ENCODE measurements at regions of chr10 and their contacts with region 1.

Region 1: DNA sequence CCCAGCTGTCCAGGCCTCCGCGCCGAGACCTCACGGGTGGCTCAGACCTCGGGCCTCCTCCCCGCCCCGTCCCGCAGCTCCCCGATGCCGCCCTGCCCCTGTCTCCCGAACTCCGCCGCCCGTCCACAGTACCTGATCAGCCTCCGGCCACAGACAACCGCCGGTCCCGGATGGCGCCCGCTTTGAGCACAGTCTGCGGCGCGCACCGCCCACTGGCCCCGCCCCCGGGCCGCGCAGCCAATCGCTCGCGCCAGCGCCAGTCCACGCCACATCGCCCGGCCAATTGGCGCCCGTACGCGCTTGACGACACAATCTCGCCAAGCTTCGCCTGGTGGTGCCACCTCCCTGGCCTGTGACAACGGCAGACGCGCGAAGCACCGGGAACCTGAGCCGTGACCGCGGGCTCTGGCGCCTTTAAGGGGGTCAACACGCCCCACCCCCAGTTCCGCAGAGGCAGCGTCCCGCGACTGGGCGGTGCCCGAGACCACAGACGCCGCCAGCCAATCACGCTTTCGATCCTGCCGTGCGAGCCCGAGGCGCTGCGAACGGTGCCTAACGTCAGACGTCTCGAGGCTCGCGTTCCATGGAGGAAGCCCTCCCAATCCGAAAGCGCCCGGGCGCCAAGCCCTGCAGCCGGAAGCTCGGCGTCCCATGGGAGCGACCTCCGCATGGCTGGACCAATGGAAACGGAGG is at the start of gene IDI1:
- DNase-seq: peak; percentile 99
- ATAC-seq: peak; percentile 78
- H3K4me3 ChIP-seq: peak within 1 kb of the TSS; percentile 79 to 95 (median 91)
- H3K4me3 Mint-ChIP-seq: peak within 1 kb of the TSS; percentile 92
- H3K27ac ChIP-seq: peak within 1 kb of the TSS; percentile 99 to 100
- H3K27ac Mint-ChIP-seq: peak within 1 kb of the TSS; percentile 97
- H3K4me1 ChIP-seq: peaks cover 41 to 50% of the 10 kb centered on the region in 2 donors
- H3K4me1 Mint-ChIP-seq: peaks cover 64% of the 10 kb centered on the region
- H3K27me3 ChIP-seq: no peaks in the 10 kb centered on the region
- H3K27me3 Mint-ChIP-seq: no peaks in the 10 kb centered on the region
- CTCF ChIP-seq: no peak
- total RNA-seq, gene IDI1: 59.8 and 60.7 TPM in 2 replicates

Region 2: GRCh38 chr10:127612-128432 is 921.1 kb before region 1 on chr10:
- CTCF ChIA-PET with region 1: no interaction called
- POLR2A ChIA-PET with region 1: no interaction called
- intact Hi-C with region 1: loop called (anchors 5 kb)
- DNase-seq: peak; percentile 87
- ATAC-seq: peak; percentile 92
- H3K4me3 ChIP-seq: peak overlapping the region in 3 of 5 experiments; percentile 26 to 62 (median 37)
- H3K4me3 Mint-ChIP-seq: peak overlapping the region; percentile 70
- H3K27ac ChIP-seq: peak overlapping the region in 1 of 2 donors; percentile 47
- H3K27ac Mint-ChIP-seq: peak overlapping the region; percentile 78
- H3K4me1 ChIP-seq: peaks cover 16 to 23% of the 10 kb centered on the region in 2 donors
- H3K4me1 Mint-ChIP-seq: peaks cover 28% of the 10 kb centered on the region
- H3K27me3 ChIP-seq: peaks cover 0 to 51% (median 17%) of the 10 kb centered on the region in 4 experiments
- H3K27me3 Mint-ChIP-seq: peaks cover 35% of the 10 kb centered on the region
- CTCF ChIP-seq: no peak

Region 3: DNA sequence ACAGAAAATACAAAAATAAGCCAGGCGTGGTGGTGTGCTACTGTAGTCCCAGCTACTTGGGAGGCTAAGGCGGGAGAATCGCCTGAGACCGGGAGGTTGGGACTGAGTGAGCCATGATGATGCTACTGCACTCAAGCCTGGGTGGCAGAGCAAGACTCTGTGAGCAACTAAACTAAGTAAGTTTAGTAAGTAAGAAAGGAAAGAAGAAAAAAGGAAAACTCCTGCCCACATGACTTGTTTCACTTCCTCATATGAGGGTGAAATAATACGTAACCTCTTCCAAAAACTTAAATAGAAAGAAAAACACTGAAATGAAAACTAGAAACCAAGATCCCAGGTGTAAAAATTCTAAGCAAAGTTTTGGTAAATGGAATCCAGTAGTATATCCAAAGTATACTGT is 197.0 kb before region 1 on chr10:
- CTCF ChIA-PET with region 1: no interaction called
- POLR2A ChIA-PET with region 1: interaction called, 11 read pairs
- intact Hi-C with region 1: loop called (anchors 5 kb)
- DNase-seq: peak; percentile 81
- ATAC-seq: peak; percentile 83
- H3K4me3 ChIP-seq: peak overlapping the region in 2 of 5 experiments; percentile 22 to 33
- H3K4me3 Mint-ChIP-seq: peak overlapping the region; percentile 59
- H3K27ac ChIP-seq: peak overlapping the region; percentile 62 to 85
- H3K27ac Mint-ChIP-seq: peak overlapping the region; percentile 80
- H3K4me1 ChIP-seq: peaks cover 18 to 22% of the 10 kb centered on the region in 2 donors
- H3K4me1 Mint-ChIP-seq: peaks cover 49% of the 10 kb centered on the region
- H3K27me3 ChIP-seq: no peaks in the 10 kb centered on the region
- H3K27me3 Mint-ChIP-seq: no peaks in the 10 kb centered on the region
- CTCF ChIP-seq: no peak

Region 4: GRCh38 chr10:931416-932318 is 117.2 kb before region 1 on chr10 and contains the start of gene LARP4B:
- CTCF ChIA-PET with region 1: interaction called, 3 read pairs
- POLR2A ChIA-PET with region 1: interaction called, 8 read pairs
- intact Hi-C with region 1: loop called (anchors 1 kb)
- DNase-seq: peak; percentile 99
- ATAC-seq: peak; percentile 96
- H3K4me3 ChIP-seq: peak within 1 kb of the TSS; percentile 60 to 89 (median 74)
- H3K4me3 Mint-ChIP-seq: peak within 1 kb of the TSS; percentile 97
- H3K27ac ChIP-seq: peak within 1 kb of the TSS; percentile 89
- H3K27ac Mint-ChIP-seq: peak within 1 kb of the TSS; percentile 95
- H3K4me1 ChIP-seq: peaks cover 30 to 33% of the 10 kb centered on the region in 2 donors
- H3K4me1 Mint-ChIP-seq: peaks cover 47% of the 10 kb centered on the region
- H3K27me3 ChIP-seq: peaks cover 0 to 4% (median 2%) of the 10 kb centered on the region in 4 experiments
- H3K27me3 Mint-ChIP-seq: peaks cover 17% of the 10 kb centered on the region
- CTCF ChIP-seq: no peak
- total RNA-seq, gene LARP4B: 124 and 129 TPM in 2 replicates

Region 5: GRCh38 chr10:1036341-1036791 is 12.5 kb before region 1 on chr10:
- CTCF ChIA-PET with region 1: no interaction called
- POLR2A ChIA-PET with region 1: no interaction called
- intact Hi-C with region 1: no loop called
- DNase-seq: peak; percentile 67
- ATAC-seq: peak; percentile 85
- H3K4me3 ChIP-seq: no peak overlapping the region
- H3K4me3 Mint-ChIP-seq: peak overlapping the region; percentile 41
- H3K27ac ChIP-seq: no peak overlapping the region
- H3K27ac Mint-ChIP-seq: peak overlapping the region; percentile 57
- H3K4me1 ChIP-seq: peaks cover 0 to 8% of the 10 kb centered on the region in 2 donors
- H3K4me1 Mint-ChIP-seq: peaks cover 25% of the 10 kb centered on the region
- H3K27me3 ChIP-seq: no peaks in the 10 kb centered on the region
- H3K27me3 Mint-ChIP-seq: no peaks in the 10 kb centered on the region
- CTCF ChIP-seq: no peak

Region 6: DNA sequence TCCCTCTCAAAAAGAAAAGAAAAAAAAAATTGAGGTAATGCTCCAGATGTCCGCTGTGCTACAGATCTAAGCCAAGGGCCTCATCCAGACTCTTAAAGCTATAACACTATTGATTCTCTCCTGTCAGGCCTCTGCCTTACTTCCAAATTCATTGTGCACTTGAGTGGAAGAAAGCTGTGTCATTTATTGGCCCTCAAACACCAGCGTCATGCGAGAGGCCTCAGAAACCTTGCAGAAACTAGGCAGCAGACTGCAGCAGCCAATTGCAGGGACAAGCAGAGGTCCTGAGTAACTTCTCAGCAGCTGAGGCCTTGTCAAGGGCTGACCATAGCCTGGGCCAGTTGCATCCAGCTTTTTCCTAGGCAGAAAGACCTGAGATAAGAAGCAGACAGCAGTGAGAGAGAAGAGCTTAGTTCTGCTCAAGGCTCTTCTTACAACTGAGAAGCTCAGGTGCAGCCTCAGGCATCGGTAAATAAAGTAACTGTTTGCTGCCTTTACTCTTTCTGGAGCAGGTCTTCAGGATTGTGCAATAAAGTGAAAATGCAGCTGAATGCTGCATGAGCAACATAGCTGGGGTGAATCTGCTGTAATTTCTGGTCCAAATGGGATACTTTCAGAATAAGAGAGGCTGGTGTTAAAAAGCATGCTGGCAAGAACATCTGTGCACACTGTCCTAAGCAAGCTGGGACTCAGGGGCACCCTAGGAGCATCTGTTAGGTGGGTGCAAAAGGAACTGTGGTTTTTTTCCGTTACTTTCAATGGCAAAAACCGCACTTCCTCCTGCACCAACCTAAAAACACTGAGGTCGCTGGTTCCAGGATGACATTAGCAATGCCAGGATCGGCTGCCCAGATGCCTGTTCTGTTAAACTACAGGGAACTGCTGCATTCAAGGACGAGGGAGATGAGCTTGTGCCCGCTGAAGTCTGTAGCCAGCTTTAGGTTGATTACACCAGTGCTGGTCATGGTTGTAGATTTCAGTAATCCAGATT is 1836.7 kb after region 1 on chr10:
- CTCF ChIA-PET with region 1: no interaction called
- POLR2A ChIA-PET with region 1: no interaction called
- intact Hi-C with region 1: no loop called
- DNase-seq: no peak
- ATAC-seq: no peak
- H3K4me3 ChIP-seq: no peak overlapping the region
- H3K4me3 Mint-ChIP-seq: no peak overlapping the region
- H3K27ac ChIP-seq: no peak overlapping the region
- H3K27ac Mint-ChIP-seq: no peak overlapping the region
- H3K4me1 ChIP-seq: no peaks in the 10 kb centered on the region
- H3K4me1 Mint-ChIP-seq: no peaks in the 10 kb centered on the region
- H3K27me3 ChIP-seq: peaks cover 0 to 6% (median 0%) of the 10 kb centered on the region in 4 experiments
- H3K27me3 Mint-ChIP-seq: peaks cover 23% of the 10 kb centered on the region
- CTCF ChIP-seq: no peak